ENCODE measurements at regions of chr6 and their contacts with region 1.

Region 1: GRCh38 chr6:107459283-107460082 is at the start of gene PDSS2:
- DNase-seq: peak; percentile 99
- H3K4me3 Mint-ChIP-seq: peak within 1 kb of the TSS; percentile 97
- H3K27ac Mint-ChIP-seq: peak within 1 kb of the TSS; percentile 95
- H3K4me1 Mint-ChIP-seq: peaks cover 21% of the 10 kb centered on the region
- H3K27me3 Mint-ChIP-seq: peaks cover 7% of the 10 kb centered on the region
- total RNA-seq, gene PDSS2: 13.3 and 14.2 TPM in 2 replicates

Region 2: GRCh38 chr6:107114213-107114905 is 345.1 kb before region 1 on chr6:
- intact Hi-C with region 1: loop called (anchors 10 kb)
- DNase-seq: peak; percentile 93
- H3K4me3 Mint-ChIP-seq: peak overlapping the region; percentile 84
- H3K27ac Mint-ChIP-seq: peak overlapping the region; percentile 77
- H3K4me1 Mint-ChIP-seq: peaks cover 18% of the 10 kb centered on the region
- H3K27me3 Mint-ChIP-seq: peaks cover 20% of the 10 kb centered on the region

Region 3: DNA sequence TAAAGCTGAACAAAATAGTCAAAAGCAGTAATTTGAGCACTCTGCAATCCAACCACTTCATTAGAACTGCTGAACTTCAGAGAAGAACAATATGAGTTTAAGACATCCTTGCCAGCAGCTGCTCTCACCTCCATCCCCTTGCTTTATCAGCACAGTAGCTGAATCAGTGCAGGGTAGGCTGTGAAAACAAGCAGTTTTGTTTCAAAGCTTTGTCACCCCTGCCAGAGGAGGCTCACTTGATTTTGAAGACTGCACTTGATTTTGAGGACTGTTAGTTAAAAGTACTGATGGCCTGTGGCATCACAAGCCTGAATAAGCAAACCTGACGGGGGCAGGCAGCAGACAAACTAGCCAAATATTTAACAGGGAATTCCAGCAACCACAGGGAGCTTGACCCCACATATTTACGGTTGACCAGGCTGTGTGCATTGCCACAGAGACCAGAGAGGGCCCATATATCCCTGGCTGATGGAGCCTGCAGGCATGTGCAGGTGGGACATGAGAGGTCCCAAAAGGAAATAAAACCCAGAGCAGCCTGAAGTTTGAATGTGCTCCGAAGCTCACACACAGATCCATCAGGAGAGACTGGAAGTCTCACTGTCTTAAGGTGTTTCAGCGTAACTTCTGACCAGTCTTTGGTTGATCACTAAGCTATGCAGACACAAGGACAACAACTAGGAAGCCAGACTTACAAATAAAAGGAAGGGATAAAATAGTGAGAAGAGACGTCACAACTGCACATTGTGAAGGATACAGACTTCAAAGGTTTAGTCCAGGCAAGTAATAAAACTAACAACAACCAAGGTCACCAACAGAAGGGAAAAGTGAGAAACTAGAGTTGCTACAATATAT is 97.5 kb before region 1 on chr6:
- intact Hi-C with region 1: no loop called
- DNase-seq: no peak
- H3K4me3 Mint-ChIP-seq: no peak overlapping the region
- H3K27ac Mint-ChIP-seq: no peak overlapping the region
- H3K4me1 Mint-ChIP-seq: no peaks in the 10 kb centered on the region
- H3K27me3 Mint-ChIP-seq: no peaks in the 10 kb centered on the region

Region 4: DNA sequence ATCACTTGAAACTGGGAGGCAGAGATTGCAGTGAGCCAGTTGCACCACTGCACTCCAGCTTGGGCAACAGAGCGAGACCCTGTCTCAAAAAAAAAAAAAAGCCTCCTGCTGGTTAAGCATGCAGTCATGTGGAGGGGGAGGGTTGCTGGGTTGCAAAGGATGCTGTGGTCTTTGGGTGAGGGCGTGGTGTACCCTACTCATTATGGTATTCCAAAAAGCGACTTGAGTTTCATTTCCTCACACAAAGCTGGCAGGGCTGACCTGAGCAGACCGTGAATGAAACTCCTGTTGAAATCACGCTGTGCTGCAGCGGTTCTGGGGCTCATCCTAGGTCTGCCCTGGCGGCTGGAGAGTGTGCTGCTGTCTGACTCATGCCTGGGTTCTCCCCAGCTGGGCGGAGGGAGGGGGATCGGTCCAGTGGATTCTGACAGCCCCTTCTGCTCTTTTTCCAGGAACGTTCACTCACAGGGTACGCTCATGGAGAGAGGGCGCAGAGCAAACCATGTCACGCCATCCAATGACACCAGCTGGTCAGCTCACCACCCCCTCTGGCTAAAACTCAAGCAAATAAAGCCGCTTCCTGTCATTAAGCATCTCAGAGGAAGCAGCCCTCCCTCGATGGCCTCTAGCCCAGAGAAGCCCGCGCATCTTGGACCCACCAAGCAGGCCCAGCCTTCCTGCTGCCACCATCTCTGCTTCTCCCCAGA is 198.4 kb after region 1 on chr6:
- intact Hi-C with region 1: loop called (anchors 1 kb)
- DNase-seq: peak; percentile 86
- H3K4me3 Mint-ChIP-seq: peak overlapping the region; percentile 68
- H3K27ac Mint-ChIP-seq: peak overlapping the region; percentile 73
- H3K4me1 Mint-ChIP-seq: peaks cover 39% of the 10 kb centered on the region
- H3K27me3 Mint-ChIP-seq: peaks cover 14% of the 10 kb centered on the region

Measured in activated CD4-positive, alpha-beta T cell treated with anti-CD3 and anti-CD28 coated beads, Interleukin-2, amount 10 ng/mL, durations not matched to agents 24 days and 14 days (primary cell).